ENCODE measurements at regions of chrX and their contacts with region 1.

Region 1: GRCh38 chrX:20252381-20253231 is 14.1 kb downstream of the RPS6KA3 start:
- DNase-seq: peak; percentile 80
- H3K4me3 Mint-ChIP-seq: no peak overlapping the region
- H3K27ac Mint-ChIP-seq: peak overlapping the region; percentile 42
- H3K4me1 Mint-ChIP-seq: no peaks in the 10 kb centered on the region
- H3K27me3 Mint-ChIP-seq: no peaks in the 10 kb centered on the region
- CTCF ChIP-seq: peak; percentile 65

Region 2: DNA sequence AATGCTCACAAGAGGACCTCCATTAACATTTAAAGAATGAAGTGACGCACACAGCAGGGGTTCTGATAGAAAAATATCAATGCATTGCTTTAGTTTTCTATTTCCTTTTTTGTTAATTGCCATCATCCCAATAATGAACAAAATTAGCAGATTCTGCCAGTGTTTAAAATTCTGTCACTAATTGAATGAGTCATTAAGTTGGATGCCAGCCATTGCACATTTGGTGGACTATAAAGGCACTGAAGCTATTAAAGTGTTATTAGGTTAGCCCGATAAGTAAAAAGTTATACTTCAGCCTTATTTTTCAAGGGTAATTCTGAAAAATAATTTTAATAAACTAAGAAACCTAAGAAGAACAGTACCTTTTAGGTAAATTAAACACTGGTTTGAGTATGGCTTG is 790.4 kb before region 1 on chrX:
- CTCF ChIA-PET with region 1: no interaction called
- intact Hi-C with region 1: no loop called
- DNase-seq: no peak
- H3K4me3 Mint-ChIP-seq: no peak overlapping the region
- H3K27ac Mint-ChIP-seq: no peak overlapping the region
- H3K4me1 Mint-ChIP-seq: no peaks in the 10 kb centered on the region
- H3K27me3 Mint-ChIP-seq: no peaks in the 10 kb centered on the region
- CTCF ChIP-seq: no peak

Region 3: GRCh38 chrX:20352935-20353336 is 100.3 kb after region 1 on chrX:
- CTCF ChIA-PET with region 1: no interaction called
- intact Hi-C with region 1: no loop called
- DNase-seq: no peak
- H3K4me3 Mint-ChIP-seq: no peak overlapping the region
- H3K27ac Mint-ChIP-seq: no peak overlapping the region
- H3K4me1 Mint-ChIP-seq: no peaks in the 10 kb centered on the region
- H3K27me3 Mint-ChIP-seq: no peaks in the 10 kb centered on the region
- CTCF ChIP-seq: no peak

Region 4: DNA sequence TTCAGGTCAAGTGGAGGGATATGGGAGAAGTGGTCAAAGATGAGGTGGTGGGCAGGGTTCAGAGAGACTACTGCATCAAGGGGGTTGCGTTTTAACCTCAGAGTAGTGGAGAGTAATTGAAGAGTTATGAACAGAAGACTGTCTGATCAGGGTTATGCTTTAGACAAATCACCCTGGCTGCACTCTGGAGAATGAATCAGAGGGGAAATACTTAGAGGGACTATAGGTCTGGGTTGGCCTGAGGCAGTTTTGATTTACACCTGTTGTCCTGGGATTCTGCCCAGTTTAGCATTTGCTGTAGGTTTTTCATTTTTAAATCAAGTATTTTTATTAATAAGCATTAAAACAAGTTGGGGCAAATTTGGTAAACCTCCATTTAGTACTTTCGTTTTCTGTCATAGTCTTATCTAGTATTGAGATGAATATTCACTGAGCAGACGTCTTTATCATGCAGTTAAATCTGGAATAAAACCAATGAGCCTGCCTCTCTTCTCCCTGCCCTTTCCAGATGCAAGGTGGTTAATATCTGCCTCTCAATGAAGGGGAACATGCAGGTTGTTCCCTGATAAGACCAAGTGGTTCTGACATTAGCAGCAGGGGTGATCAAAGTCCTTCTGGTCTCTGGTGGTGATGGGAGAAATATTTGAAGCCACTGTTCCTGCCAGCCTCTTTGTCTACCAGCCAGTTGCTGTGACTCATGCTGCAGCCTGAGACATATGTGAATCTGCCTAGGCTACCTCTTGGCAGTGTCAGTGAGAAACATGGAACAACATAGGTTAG is 130.1 kb after region 1 on chrX:
- CTCF ChIA-PET with region 1: interaction called, 13 read pairs
- intact Hi-C with region 1: no loop called
- DNase-seq: peak; percentile 12
- H3K4me3 Mint-ChIP-seq: no peak overlapping the region
- H3K27ac Mint-ChIP-seq: no peak overlapping the region
- H3K4me1 Mint-ChIP-seq: peaks cover 42% of the 10 kb centered on the region
- H3K27me3 Mint-ChIP-seq: no peaks in the 10 kb centered on the region
- CTCF ChIP-seq: no peak

Region 5: DNA sequence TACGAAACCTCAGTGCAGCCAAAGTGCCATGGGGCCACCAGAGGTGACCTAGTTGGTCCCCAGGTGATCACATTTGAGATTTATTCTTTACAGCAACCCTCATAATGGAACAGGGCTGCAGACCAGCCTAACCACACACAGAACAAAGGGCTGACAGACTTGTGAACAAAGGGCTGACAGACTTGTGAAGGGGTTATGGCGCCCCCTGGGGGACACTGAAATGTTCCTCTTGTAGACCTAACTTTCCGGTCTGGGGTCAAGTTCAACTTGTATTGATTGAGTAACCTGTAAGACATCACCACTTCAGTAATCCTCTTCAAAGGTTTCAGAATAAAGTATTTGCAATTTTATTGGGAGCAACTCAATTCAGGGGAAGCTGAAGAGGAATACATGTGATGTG is 190.0 kb after region 1 on chrX:
- CTCF ChIA-PET with region 1: no interaction called
- intact Hi-C with region 1: loop called (anchors 1 kb)
- DNase-seq: peak; percentile 87
- H3K4me3 Mint-ChIP-seq: no peak overlapping the region
- H3K27ac Mint-ChIP-seq: no peak overlapping the region
- H3K4me1 Mint-ChIP-seq: no peaks in the 10 kb centered on the region
- H3K27me3 Mint-ChIP-seq: no peaks in the 10 kb centered on the region
- CTCF ChIP-seq: peak; percentile 65

Region 6: GRCh38 chrX:20515841-20516461 is 263.3 kb after region 1 on chrX:
- CTCF ChIA-PET with region 1: interaction called, 6 read pairs
- intact Hi-C with region 1: loop called (anchors 2 kb)
- DNase-seq: peak; percentile 22
- H3K4me3 Mint-ChIP-seq: no peak overlapping the region
- H3K27ac Mint-ChIP-seq: peak overlapping the region; percentile 20
- H3K4me1 Mint-ChIP-seq: peaks cover 48% of the 10 kb centered on the region
- H3K27me3 Mint-ChIP-seq: no peaks in the 10 kb centered on the region
- CTCF ChIP-seq: no peak